ENCODE measurements at regions of chr1 and their contacts with region 1.

Region 1: GRCh38 chr1:110872745-110873720 is at the start of gene CD53:
- DNase-seq: peak; percentile 27
- ATAC-seq: peak; percentile 64
- H3K4me3 Mint-ChIP-seq: peak within 1 kb of the TSS; percentile 96
- H3K27ac Mint-ChIP-seq: peak within 1 kb of the TSS; percentile 99
- H3K4me1 Mint-ChIP-seq: peaks cover 75% of the 10 kb centered on the region
- H3K27me3 Mint-ChIP-seq: no peaks in the 10 kb centered on the region
- CTCF ChIP-seq: no peak
- total RNA-seq, gene CD53: 491 and 522 TPM in 2 replicates

Region 2: GRCh38 chr1:110630839-110631663 is 242.0 kb before region 1 on chr1:
- CTCF ChIA-PET with region 1: no interaction called
- POLR2A ChIA-PET with region 1: interaction called, 18 read pairs
- intact Hi-C with region 1: no loop called
- DNase-seq: peak; percentile 72
- ATAC-seq: peak; percentile 73
- H3K4me3 Mint-ChIP-seq: no peak overlapping the region
- H3K27ac Mint-ChIP-seq: no peak overlapping the region
- H3K4me1 Mint-ChIP-seq: peaks cover 46% of the 10 kb centered on the region
- H3K27me3 Mint-ChIP-seq: no peaks in the 10 kb centered on the region
- CTCF ChIP-seq: peak; percentile 82

Region 3: DNA sequence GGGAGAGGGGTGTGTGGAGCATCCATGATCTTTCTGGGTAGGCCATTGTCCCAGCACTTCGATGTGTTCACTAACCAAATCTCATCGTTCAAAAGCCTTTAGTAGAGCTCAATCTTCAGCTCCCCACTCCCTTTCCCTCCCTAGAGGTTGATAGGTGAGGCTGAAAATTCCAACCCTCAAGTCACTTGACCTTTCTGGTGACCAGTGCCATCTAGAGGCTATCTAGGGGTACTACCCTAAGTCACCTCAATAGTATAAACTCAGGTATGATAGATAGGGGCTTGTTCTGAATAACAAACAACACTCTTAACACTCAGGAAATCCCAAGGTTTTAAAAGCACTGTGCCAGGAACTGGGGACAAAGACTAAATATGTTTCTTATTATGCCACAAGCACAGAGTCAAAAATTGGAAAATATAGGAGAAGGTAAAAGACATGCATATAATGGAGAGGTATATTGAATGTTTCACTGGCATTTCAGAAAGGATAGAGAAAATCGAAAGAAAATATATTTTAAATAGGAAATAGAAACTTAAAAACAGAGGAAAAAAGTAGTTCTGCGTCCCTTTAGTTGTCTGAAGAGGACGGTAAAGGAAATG is 43.0 kb before region 1 on chr1:
- CTCF ChIA-PET with region 1: interaction called, 4 read pairs
- POLR2A ChIA-PET with region 1: interaction called, 4 read pairs
- intact Hi-C with region 1: loop called (anchors 2 kb)
- DNase-seq: no peak
- ATAC-seq: peak; percentile 92
- H3K4me3 Mint-ChIP-seq: no peak overlapping the region
- H3K27ac Mint-ChIP-seq: no peak overlapping the region
- H3K4me1 Mint-ChIP-seq: peaks cover 34% of the 10 kb centered on the region
- H3K27me3 Mint-ChIP-seq: no peaks in the 10 kb centered on the region
- CTCF ChIP-seq: peak; percentile 97

Region 4: GRCh38 chr1:110893908-110894490 is 21.0 kb after region 1 on chr1:
- CTCF ChIA-PET with region 1: interaction called, 3 read pairs
- POLR2A ChIA-PET with region 1: interaction called, 31 read pairs
- intact Hi-C with region 1: loop called (anchors 2 kb)
- DNase-seq: no peak
- ATAC-seq: peak; percentile 41
- H3K4me3 Mint-ChIP-seq: no peak overlapping the region
- H3K27ac Mint-ChIP-seq: peak overlapping the region; percentile 13
- H3K4me1 Mint-ChIP-seq: peaks cover 85% of the 10 kb centered on the region
- H3K27me3 Mint-ChIP-seq: no peaks in the 10 kb centered on the region
- CTCF ChIP-seq: no peak

Region 5: DNA sequence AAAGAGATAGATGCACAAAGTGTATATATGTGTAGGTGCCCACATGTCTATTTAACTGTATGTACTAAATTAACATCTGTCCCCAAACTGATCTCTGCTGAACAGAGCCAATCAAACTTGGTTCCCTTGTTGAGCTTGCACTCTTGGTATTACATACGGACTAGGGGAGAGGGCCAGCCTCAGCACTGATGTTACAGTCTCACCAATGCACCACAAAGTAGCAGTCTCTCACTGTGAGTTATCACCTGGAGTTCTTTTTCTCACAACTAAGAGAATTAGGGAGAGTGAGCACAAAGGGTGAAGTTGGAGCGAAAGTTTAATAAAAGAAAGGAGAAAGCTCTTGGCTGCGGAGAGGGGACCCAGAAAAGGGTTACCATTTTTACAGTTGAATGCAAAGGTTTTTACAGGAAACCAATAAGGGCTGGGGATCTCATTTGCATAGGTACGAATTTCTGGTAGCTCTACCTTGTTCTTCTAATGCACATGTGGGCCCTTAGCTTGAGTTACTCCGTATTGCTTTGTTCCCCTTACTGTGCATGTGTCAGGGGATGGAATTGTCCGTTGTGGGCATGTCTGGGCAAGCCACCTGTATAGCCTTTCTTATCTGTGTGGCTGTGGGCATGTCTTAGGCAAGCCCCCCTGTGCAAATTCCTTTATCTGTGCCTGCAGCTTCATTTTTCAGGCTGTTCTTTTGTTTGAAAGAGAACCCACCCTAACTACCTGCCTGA is 341.2 kb after region 1 on chr1:
- CTCF ChIA-PET with region 1: no interaction called
- POLR2A ChIA-PET with region 1: interaction called, 10 read pairs
- intact Hi-C with region 1: loop called (anchors 2 kb)
- DNase-seq: no peak
- ATAC-seq: no peak
- H3K4me3 Mint-ChIP-seq: peak overlapping the region; percentile 42
- H3K27ac Mint-ChIP-seq: peak overlapping the region; percentile 95
- H3K4me1 Mint-ChIP-seq: peaks cover 76% of the 10 kb centered on the region
- H3K27me3 Mint-ChIP-seq: no peaks in the 10 kb centered on the region
- CTCF ChIP-seq: no peak

Measured in activated B cell treated with CpG ODN at 0.5 μM for 24 hours (primary cell).